ENCODE measurements at regions of chr9 and their contacts with region 1.

Region 1: GRCh38 chr9:36190388-36191287 is at the start of gene CLTA:
- DNase-seq: peak; percentile 95 to 100 (median 98)

Region 2: DNA sequence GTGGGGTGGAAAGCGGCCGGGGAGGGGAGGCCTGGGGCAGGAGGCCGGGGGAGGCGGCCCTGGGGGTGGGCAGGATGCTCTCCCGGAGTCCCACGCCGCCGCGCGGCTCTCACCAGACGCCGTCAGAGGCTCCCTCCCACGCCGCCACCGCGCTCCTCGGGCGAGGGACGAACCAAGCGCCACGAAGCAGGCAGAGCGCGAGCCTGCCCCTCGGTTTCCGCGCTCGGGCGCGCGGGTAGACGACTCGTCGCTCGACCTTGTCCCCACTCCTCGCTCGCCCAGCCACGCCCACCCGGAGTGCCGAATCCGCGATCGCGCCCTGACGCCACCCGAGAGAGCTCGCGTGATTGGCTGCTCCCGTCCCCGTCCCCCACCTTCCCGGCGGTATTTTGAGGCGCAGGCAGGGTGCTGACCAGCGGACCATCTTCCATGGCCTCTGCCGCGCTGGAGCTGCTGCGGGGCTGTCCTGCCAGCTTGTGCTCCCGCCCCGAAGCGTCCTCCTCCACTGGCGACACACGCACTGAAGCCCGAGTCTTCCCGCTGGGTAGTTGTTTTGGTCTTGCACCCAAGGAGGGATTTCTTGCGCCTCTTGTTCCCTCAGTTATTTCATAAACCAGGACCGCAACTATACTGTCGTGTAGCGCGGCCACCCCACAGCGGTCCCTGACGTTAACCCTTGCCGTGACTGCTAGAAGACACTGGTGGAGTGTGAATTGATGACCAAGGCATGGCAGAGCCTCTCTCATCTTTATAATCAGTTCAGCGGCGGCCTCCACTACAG is 67.8 kb after region 1 on chr9 and contains the start of gene GNE:
- intact Hi-C with region 1: loop called (anchors 2 kb)
- DNase-seq: peak; percentile 95 to 100 (median 100)

Region 3: DNA sequence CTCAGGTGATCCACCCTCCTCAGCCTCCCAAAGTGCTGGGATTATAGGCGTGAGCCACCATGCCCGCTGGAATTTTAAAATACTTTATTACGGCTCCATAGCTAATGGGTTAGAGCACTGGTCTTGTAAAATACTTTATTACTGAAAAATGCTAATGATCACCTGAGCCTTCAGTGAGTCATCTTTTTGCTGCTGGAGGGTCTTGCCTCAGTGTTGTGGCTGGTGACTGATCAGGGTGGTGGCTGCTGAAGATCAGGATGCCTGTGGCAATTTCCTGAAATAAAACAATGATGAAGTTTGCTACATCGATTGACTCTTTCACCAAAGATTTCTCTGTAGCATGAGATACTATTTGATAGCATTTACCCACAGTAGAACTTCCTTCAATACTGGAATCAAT is 93.6 kb after region 1 on chr9:
- intact Hi-C with region 1: no loop called
- DNase-seq: no peak

Region 4: DNA sequence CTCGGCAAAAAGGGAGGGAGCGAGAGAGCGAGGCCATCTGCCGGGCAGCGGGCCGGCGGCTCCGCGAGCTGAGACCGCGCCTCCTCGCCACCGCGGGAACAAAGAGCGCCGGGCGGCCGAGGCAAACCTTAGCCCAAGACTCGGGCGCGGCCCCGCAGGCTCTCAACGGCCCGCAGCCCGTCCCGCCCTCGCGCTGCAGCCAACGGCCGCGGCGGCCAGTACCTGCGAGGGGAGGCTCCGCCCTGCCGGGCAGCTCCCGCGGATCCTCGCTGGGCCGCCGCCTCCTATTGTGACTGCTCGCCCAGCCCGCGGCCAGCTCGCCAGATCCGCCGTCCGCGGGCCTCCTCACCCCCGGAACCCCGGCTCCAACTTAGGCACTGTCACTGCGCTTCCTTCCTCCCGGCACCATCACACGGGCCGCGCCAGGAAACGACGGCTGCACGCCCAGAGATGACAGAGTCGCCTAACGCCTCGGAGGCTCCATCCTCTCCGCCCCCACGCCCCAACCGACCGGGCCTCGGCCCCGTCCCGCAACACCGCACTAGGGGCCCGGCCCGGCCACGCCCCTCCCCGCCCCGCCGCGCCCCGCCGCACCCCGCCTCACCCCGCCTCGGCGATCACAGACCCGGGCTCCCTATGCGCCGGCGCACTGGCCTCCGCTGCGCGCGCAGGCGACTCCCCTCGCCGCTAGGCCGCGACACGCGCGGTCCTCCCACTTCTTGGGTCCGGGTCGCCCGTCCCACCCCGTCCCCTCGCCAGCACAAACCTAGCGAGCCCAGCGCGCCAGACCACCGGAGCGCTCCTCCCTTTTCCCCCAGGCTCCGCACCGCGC is 209.9 kb after region 1 on chr9:
- intact Hi-C with region 1: loop called (anchors 5 kb)
- DNase-seq: peak; percentile 68 to 96 (median 89)